Natural killer cell (primary cell): ENCODE measurements at regions of chr14 and their contacts with region 1.

Region 1: DNA sequence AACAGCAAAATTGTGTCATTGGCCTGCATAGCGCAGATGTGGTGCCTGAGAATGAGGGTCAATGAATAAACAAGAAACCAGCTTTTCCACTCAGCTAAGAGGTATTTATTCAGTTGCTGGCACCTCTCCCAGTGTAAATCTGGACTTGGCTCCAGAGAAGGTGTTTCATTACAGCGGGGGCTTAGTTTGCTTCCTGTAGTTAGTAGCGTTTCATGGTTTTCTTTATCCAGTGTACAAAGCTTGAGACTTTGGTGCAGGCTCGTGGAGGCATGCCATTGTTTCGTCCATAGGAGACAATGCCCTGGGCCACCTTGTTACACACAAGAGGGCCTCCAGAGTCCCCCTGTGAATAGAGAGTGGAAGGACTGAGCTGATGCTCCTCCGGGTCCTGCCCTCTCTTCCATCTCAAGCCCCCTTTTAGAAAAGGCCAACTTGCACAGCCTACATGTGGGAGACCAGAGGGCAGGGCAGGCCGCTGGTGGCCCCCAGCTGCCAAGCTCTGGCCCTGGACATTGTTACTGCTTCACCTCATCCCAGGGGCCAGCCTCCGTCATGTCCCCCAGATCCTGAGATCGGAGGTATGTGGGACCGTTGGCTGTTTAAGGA is 3.0 kb downstream of the GZMB start:
- DNase-seq: no peak
- ATAC-seq: no peak
- H3K4me3 ChIP-seq: peak overlapping the region; percentile 72
- H3K4me3 Mint-ChIP-seq: peak overlapping the region; percentile 94
- H3K27ac ChIP-seq: peak overlapping the region; percentile 99
- H3K27ac Mint-ChIP-seq: peak overlapping the region; percentile 99
- H3K4me1 ChIP-seq: peaks cover 79% of the 10 kb centered on the region
- H3K4me1 Mint-ChIP-seq: peaks cover 86 to 89% of the 10 kb centered on the region in 2 donors
- H3K27me3 ChIP-seq: no peaks in the 10 kb centered on the region
- H3K27me3 Mint-ChIP-seq: no peaks in the 10 kb centered on the region
- CTCF ChIP-seq: no peak

Region 2: DNA sequence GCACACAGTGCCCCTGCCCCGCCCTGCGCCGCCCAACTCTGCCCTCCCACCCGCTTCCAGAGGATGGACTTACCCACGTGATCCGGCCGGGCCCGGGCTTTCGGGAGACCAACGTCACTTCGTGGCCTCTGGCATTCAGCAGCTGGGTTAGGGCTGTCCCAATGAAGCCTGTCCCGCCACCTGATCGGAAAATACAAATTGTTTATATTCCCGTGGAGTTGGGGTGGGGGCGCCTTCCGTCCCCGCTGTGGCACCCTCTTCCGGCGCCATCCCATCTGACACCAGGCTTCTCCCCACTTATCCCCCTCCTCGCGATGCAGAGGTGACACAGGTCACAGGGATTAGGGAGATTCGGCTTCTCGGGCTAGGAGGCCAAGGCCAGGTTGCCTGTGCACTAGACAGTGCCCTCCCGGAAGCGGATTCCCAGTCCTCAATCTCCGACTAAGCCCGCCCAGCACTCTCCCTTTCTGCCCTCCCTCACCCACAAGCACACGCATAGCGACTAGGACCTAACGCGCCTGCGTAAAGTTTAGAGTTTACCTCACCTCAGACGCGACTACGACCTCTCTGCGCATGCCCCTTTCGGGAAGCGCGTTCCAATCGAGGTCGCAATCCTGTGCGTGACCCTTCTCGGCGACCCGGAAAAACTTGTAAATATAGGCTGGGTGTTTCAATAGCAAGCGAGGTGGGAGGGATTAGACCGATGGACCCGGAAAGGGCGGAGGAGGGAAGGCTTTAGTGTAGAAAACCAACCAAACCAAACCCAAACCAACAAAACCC is 188.5 kb before region 1 on chr14 and contains the start of gene SDR39U1:
- intact Hi-C with region 1: loop called (anchors 5 kb)
- DNase-seq: peak; percentile 88 to 100
- ATAC-seq: peak; percentile 88 to 97 (median 92)
- H3K4me3 ChIP-seq: peak within 1 kb of the TSS; percentile 92
- H3K4me3 Mint-ChIP-seq: peak within 1 kb of the TSS; percentile 91
- H3K27ac ChIP-seq: peak within 1 kb of the TSS; percentile 96
- H3K27ac Mint-ChIP-seq: peak within 1 kb of the TSS; percentile 97 to 98
- H3K4me1 ChIP-seq: peaks cover 25% of the 10 kb centered on the region
- H3K4me1 Mint-ChIP-seq: peaks cover 37 to 48% of the 10 kb centered on the region in 2 donors
- H3K27me3 ChIP-seq: no peaks in the 10 kb centered on the region
- H3K27me3 Mint-ChIP-seq: peaks cover 0 to 5% of the 10 kb centered on the region in 2 donors
- CTCF ChIP-seq: no peak
- total RNA-seq, gene SDR39U1: 97.1 to 106 (median 100) TPM

Region 3: GRCh38 chr14:24605435-24606190 is 25.4 kb before region 1 on chr14:
- intact Hi-C with region 1: loop called (anchors 1 kb)
- DNase-seq: peak; percentile 70 to 78
- ATAC-seq: peak; percentile 62 to 71 (median 66)
- H3K4me3 ChIP-seq: peak overlapping the region; percentile 1
- H3K4me3 Mint-ChIP-seq: peak overlapping the region; percentile 95
- H3K27ac ChIP-seq: peak overlapping the region; percentile 83
- H3K27ac Mint-ChIP-seq: peak overlapping the region; percentile 99
- H3K4me1 ChIP-seq: peaks cover 55% of the 10 kb centered on the region
- H3K4me1 Mint-ChIP-seq: peaks cover 55 to 58% of the 10 kb centered on the region in 2 donors
- H3K27me3 ChIP-seq: no peaks in the 10 kb centered on the region
- H3K27me3 Mint-ChIP-seq: no peaks in the 10 kb centered on the region
- CTCF ChIP-seq: peak; percentile 96

Region 4: GRCh38 chr14:24665440-24665991 is 34.5 kb after region 1 on chr14:
- intact Hi-C with region 1: loop called (anchors 1 kb)
- DNase-seq: peak; percentile 41 to 54
- ATAC-seq: peak; percentile 85 to 89 (median 86)
- H3K4me3 ChIP-seq: no peak overlapping the region
- H3K4me3 Mint-ChIP-seq: peak overlapping the region; percentile 78
- H3K27ac ChIP-seq: peak overlapping the region; percentile 62
- H3K27ac Mint-ChIP-seq: peak overlapping the region; percentile 86 to 90
- H3K4me1 ChIP-seq: peaks cover 38% of the 10 kb centered on the region
- H3K4me1 Mint-ChIP-seq: peaks cover 79 to 86% of the 10 kb centered on the region in 2 donors
- H3K27me3 ChIP-seq: no peaks in the 10 kb centered on the region
- H3K27me3 Mint-ChIP-seq: no peaks in the 10 kb centered on the region
- CTCF ChIP-seq: no peak

Region 5: GRCh38 chr14:24673534-24674203 is 42.7 kb after region 1 on chr14:
- intact Hi-C with region 1: loop called (anchors 1 kb)
- DNase-seq: peak; percentile 52 to 88
- ATAC-seq: peak; percentile 65 to 81 (median 80)
- H3K4me3 ChIP-seq: peak overlapping the region; percentile 5
- H3K4me3 Mint-ChIP-seq: peak overlapping the region; percentile 95
- H3K27ac ChIP-seq: peak overlapping the region; percentile 80
- H3K27ac Mint-ChIP-seq: peak overlapping the region; percentile 99
- H3K4me1 ChIP-seq: peaks cover 36% of the 10 kb centered on the region
- H3K4me1 Mint-ChIP-seq: peaks cover 83 to 91% of the 10 kb centered on the region in 2 donors
- H3K27me3 ChIP-seq: no peaks in the 10 kb centered on the region
- H3K27me3 Mint-ChIP-seq: no peaks in the 10 kb centered on the region
- CTCF ChIP-seq: no peak

Region 6: DNA sequence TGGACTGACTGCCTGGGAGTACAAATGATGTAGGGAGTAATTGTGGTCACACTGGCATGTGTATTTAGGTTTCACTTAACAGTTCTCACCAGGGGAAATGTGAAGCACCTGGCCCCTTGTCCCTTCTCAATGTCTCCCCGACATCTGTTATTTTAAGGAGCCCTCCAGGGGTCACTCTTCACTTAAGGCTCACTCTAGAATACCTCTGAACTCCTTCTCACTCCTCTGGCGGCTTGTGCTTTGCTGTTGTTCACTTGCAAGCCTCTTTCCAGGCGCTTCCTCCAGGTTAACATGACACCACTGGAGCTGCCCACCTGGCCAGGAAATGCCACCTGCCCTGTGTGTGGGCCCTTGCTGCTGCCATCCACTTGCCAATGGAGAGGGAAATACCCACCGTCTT is 59.5 kb after region 1 on chr14:
- intact Hi-C with region 1: loop called (anchors 1 kb)
- DNase-seq: peak in 1 of 2 donors; percentile 55
- ATAC-seq: peak in 1 of 3 donors; percentile 17
- H3K4me3 ChIP-seq: no peak overlapping the region
- H3K4me3 Mint-ChIP-seq: peak overlapping the region; percentile 22
- H3K27ac ChIP-seq: no peak overlapping the region
- H3K27ac Mint-ChIP-seq: peak overlapping the region in 1 of 2 donors; percentile 78
- H3K4me1 ChIP-seq: peaks cover 57% of the 10 kb centered on the region
- H3K4me1 Mint-ChIP-seq: peaks cover 62% of the 10 kb centered on the region in 2 donors
- H3K27me3 ChIP-seq: no peaks in the 10 kb centered on the region
- H3K27me3 Mint-ChIP-seq: no peaks in the 10 kb centered on the region
- CTCF ChIP-seq: peak; percentile 40

Region 7: GRCh38 chr14:24774187-24774915 is 143.4 kb after region 1 on chr14:
- intact Hi-C with region 1: no loop called
- DNase-seq: no peak
- ATAC-seq: no peak
- H3K4me3 ChIP-seq: no peak overlapping the region
- H3K4me3 Mint-ChIP-seq: no peak overlapping the region
- H3K27ac ChIP-seq: no peak overlapping the region
- H3K27ac Mint-ChIP-seq: no peak overlapping the region
- H3K4me1 ChIP-seq: no peaks in the 10 kb centered on the region
- H3K4me1 Mint-ChIP-seq: peaks cover 0 to 6% of the 10 kb centered on the region in 2 donors
- H3K27me3 ChIP-seq: no peaks in the 10 kb centered on the region
- H3K27me3 Mint-ChIP-seq: peaks cover 6 to 18% of the 10 kb centered on the region in 2 donors
- CTCF ChIP-seq: no peak